CD8-positive, alpha-beta T cell (primary cell): ENCODE measurements at regions of chr5 and their contacts with region 1.

Region 1: DNA sequence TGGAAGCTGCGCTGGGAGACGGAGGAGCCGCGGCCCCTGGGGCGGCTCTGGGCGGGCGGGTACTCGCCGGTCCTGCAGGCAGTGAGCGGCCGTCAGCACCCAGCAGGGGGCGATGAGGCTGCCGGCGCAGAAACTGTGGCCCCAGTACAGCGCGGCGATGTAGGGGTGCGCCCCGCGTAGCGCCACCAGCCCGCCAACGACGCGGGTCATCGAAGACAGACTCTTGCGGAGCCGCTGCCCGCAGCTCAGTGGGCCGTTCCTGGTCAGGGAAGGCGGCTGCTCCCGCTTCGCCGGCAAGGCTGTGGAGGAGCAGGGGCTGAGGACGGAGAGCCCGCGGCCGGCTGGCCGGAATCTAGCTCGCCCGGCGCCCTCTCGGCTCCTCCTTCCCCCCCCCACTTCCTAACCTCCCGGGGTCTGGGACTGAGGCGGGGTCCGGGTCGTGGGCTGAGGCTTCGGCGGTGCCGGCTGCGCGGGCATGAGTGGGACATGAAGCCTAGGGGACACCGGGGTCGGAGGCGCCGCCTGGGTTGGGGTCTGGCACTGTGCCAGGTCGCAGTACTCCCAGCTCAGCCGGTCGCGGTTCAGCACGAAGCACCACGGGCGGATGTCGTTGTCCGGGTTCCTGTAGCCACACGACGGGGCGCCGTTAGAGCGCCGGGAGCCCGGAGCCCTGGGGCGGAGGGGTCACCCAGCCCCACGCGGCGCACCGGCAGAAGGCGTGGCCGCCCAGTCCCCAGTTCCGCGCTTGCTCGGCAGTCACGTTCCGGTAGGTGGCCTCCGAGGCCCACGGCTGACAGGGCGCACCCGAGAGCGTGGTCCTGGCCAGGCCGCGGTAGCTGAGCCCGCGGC is 3.6 kb upstream of the PFN3 start:
- DNase-seq: peak; percentile 74 to 94 (median 85)
- ATAC-seq: peak; percentile 73
- H3K4me3 ChIP-seq: peak overlapping the region; percentile 52 to 72
- H3K4me3 Mint-ChIP-seq: peak overlapping the region; percentile 79
- H3K27ac ChIP-seq: peak overlapping the region in 1 of 2 experiments; percentile 59
- H3K27ac Mint-ChIP-seq: no peak overlapping the region
- H3K4me1 ChIP-seq: peaks cover 44% of the 10 kb centered on the region
- H3K4me1 Mint-ChIP-seq: peaks cover 38% of the 10 kb centered on the region
- H3K27me3 ChIP-seq: peaks cover 0 to 2% of the 10 kb centered on the region in 2 experiments
- H3K27me3 Mint-ChIP-seq: no peaks in the 10 kb centered on the region
- CTCF ChIP-seq: peak; percentile 52

Region 2: DNA sequence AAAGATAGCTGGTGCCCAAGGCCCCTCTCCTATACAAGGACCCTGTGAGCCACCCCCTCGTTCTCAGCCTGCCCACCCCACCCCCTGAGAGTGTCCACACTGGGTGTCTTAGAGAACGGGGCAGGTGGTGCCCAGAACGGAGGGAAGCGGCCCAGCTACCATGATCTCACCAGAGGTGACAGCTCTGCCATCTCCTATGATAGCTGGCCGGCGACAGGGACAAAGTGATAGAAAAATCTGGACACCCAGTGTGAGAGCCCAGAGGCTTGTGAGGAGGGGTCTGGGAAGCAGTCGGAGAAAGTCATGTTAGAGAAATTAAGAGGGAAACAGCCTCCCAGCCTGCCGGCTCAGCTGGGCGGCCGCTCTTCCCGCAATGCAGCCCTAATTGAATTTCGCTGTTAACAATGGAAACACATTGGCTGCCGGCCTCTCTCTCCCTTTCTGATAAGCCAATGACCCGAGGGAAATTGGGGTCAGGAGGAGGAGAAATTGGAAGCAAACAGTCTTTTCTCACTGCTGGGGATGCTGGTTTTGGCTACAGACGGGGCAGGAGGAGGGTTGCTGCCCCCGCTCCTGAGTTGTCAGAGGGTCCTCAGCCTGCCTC is 537.2 kb before region 1 on chr5:
- CTCF ChIA-PET with region 1: no interaction called
- POLR2A ChIA-PET with region 1: no interaction called
- intact Hi-C with region 1: no loop called
- DNase-seq: no peak
- ATAC-seq: no peak
- H3K4me3 ChIP-seq: no peak overlapping the region
- H3K4me3 Mint-ChIP-seq: no peak overlapping the region
- H3K27ac ChIP-seq: no peak overlapping the region
- H3K27ac Mint-ChIP-seq: no peak overlapping the region
- H3K4me1 ChIP-seq: peaks cover 9% of the 10 kb centered on the region
- H3K4me1 Mint-ChIP-seq: no peaks in the 10 kb centered on the region
- H3K27me3 ChIP-seq: peaks cover 0 to 2% of the 10 kb centered on the region in 2 experiments
- H3K27me3 Mint-ChIP-seq: peaks cover 25% of the 10 kb centered on the region
- CTCF ChIP-seq: no peak

Region 3: GRCh38 chr5:177317959-177318377 is 86.0 kb before region 1 on chr5:
- CTCF ChIA-PET with region 1: interaction called, 59 read pairs
- POLR2A ChIA-PET with region 1: no interaction called
- intact Hi-C with region 1: loop called in 1 of 2 experiments (anchors 1 kb)
- DNase-seq: peak; percentile 52 to 85 (median 75)
- ATAC-seq: peak; percentile 81
- H3K4me3 ChIP-seq: no peak overlapping the region
- H3K4me3 Mint-ChIP-seq: no peak overlapping the region
- H3K27ac ChIP-seq: no peak overlapping the region
- H3K27ac Mint-ChIP-seq: no peak overlapping the region
- H3K4me1 ChIP-seq: peaks cover 10% of the 10 kb centered on the region
- H3K4me1 Mint-ChIP-seq: peaks cover 14% of the 10 kb centered on the region
- H3K27me3 ChIP-seq: no peaks in the 10 kb centered on the region
- H3K27me3 Mint-ChIP-seq: no peaks in the 10 kb centered on the region
- CTCF ChIP-seq: peak; percentile 90

Region 4: GRCh38 chr5:177370488-177371119 is 33.4 kb before region 1 on chr5:
- CTCF ChIA-PET with region 1: interaction called, 55 read pairs
- POLR2A ChIA-PET with region 1: interaction called, 4 read pairs
- intact Hi-C with region 1: loop called in 1 of 2 experiments (anchors 2 kb)
- DNase-seq: peak in 8 of 9 experiments; percentile 18 to 81 (median 58)
- ATAC-seq: peak; percentile 63
- H3K4me3 ChIP-seq: no peak overlapping the region
- H3K4me3 Mint-ChIP-seq: no peak overlapping the region
- H3K27ac ChIP-seq: peak overlapping the region in 1 of 2 experiments; percentile 48
- H3K27ac Mint-ChIP-seq: peak overlapping the region; percentile 32
- H3K4me1 ChIP-seq: peaks cover 73% of the 10 kb centered on the region
- H3K4me1 Mint-ChIP-seq: peaks cover 69% of the 10 kb centered on the region
- H3K27me3 ChIP-seq: no peaks in the 10 kb centered on the region
- H3K27me3 Mint-ChIP-seq: no peaks in the 10 kb centered on the region
- CTCF ChIP-seq: no peak

Region 5: GRCh38 chr5:177425801-177426565 is 22.0 kb after region 1 on chr5:
- CTCF ChIA-PET with region 1: interaction called, 222 read pairs
- POLR2A ChIA-PET with region 1: interaction called, 48 read pairs
- intact Hi-C with region 1: loop called (anchors 1 kb)
- DNase-seq: peak; percentile 99 to 100 (median 99)
- ATAC-seq: peak; percentile 80
- H3K4me3 ChIP-seq: peak overlapping the region; percentile 63 to 65
- H3K4me3 Mint-ChIP-seq: peak overlapping the region; percentile 91
- H3K27ac ChIP-seq: peak overlapping the region; percentile 86 to 92
- H3K27ac Mint-ChIP-seq: peak overlapping the region; percentile 98
- H3K4me1 ChIP-seq: peaks cover 46% of the 10 kb centered on the region
- H3K4me1 Mint-ChIP-seq: peaks cover 53% of the 10 kb centered on the region
- H3K27me3 ChIP-seq: no peaks in the 10 kb centered on the region
- H3K27me3 Mint-ChIP-seq: no peaks in the 10 kb centered on the region
- CTCF ChIP-seq: no peak

Region 6: DNA sequence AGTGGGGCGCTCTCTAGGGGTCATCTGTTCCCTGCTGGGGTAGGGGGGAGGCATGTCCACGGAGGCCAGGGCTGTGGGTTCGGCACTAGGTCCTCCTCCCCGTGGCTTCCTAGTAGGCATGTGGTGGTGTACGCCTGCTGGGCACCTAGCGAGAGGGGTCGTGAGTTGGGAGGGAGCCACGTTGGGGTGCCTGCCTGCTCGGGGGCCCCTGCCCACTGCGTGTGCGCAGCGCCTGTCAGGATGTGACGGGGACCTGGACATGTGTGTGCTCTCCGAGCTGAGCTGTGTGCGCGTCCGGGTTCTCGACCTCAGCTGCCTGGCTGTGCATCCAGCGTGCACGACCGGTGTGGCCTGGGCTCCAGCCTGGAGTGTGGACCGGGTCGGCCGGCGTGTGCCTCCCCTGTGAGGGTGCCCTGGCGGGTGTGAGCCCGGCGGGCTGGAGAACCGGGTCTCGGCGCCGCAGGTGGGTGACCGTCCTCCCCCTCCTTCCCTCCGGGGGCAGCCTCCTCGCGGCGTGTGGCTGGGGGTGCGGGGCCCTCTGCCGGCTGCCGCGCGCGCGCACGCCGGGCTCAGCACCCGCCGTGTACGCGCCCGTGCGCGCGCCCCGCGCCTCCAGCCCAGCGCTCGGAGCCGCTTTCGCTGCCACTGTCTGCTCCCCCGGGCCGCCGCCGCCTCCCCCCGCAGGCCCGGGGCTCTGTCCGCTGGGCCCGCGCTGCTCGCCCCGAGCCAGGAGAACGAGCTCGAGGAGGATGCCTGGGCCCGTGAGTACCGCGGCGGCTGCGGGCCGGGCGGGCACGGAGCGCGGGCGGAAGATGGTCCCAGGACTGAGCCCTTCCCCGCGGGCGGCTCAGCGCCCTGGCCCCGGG is 42.4 kb after region 1 on chr5 and contains the start of gene PRR7:
- CTCF ChIA-PET with region 1: interaction called, 628 read pairs
- POLR2A ChIA-PET with region 1: interaction called, 185 read pairs
- intact Hi-C with region 1: loop called in 1 of 2 experiments (anchors 2 kb)
- DNase-seq: peak; percentile 51 to 93 (median 75)
- ATAC-seq: peak; percentile 54
- H3K4me3 ChIP-seq: peak within 1 kb of the TSS; percentile 56 to 61
- H3K4me3 Mint-ChIP-seq: peak within 1 kb of the TSS; percentile 79
- H3K27ac ChIP-seq: peak within 1 kb of the TSS; percentile 61 to 84
- H3K27ac Mint-ChIP-seq: peak within 1 kb of the TSS; percentile 95
- H3K4me1 ChIP-seq: peaks cover 33% of the 10 kb centered on the region
- H3K4me1 Mint-ChIP-seq: peaks cover 44% of the 10 kb centered on the region
- H3K27me3 ChIP-seq: no peaks in the 10 kb centered on the region
- H3K27me3 Mint-ChIP-seq: no peaks in the 10 kb centered on the region
- CTCF ChIP-seq: no peak
- total RNA-seq, gene PRR7: 21.0 TPM

Region 7: GRCh38 chr5:177473461-177474001 is 69.5 kb after region 1 on chr5 and contains the start of gene DBN1:
- CTCF ChIA-PET with region 1: interaction called, 34 read pairs
- POLR2A ChIA-PET with region 1: no interaction called
- intact Hi-C with region 1: no loop called
- DNase-seq: peak in 2 of 9 experiments; percentile 53
- ATAC-seq: peak; percentile 27
- H3K4me3 ChIP-seq: peak within 1 kb of the TSS; percentile 50 to 67
- H3K4me3 Mint-ChIP-seq: peak within 1 kb of the TSS; percentile 80
- H3K27ac ChIP-seq: peak within 1 kb of the TSS; percentile 30 to 53
- H3K27ac Mint-ChIP-seq: peak within 1 kb of the TSS; percentile 82
- H3K4me1 ChIP-seq: peaks cover 43% of the 10 kb centered on the region
- H3K4me1 Mint-ChIP-seq: peaks cover 52% of the 10 kb centered on the region
- H3K27me3 ChIP-seq: no peaks in the 10 kb centered on the region
- H3K27me3 Mint-ChIP-seq: no peaks in the 10 kb centered on the region
- CTCF ChIP-seq: no peak
- total RNA-seq, gene DBN1: 16.2 to 19.9 TPM

Region 8: DNA sequence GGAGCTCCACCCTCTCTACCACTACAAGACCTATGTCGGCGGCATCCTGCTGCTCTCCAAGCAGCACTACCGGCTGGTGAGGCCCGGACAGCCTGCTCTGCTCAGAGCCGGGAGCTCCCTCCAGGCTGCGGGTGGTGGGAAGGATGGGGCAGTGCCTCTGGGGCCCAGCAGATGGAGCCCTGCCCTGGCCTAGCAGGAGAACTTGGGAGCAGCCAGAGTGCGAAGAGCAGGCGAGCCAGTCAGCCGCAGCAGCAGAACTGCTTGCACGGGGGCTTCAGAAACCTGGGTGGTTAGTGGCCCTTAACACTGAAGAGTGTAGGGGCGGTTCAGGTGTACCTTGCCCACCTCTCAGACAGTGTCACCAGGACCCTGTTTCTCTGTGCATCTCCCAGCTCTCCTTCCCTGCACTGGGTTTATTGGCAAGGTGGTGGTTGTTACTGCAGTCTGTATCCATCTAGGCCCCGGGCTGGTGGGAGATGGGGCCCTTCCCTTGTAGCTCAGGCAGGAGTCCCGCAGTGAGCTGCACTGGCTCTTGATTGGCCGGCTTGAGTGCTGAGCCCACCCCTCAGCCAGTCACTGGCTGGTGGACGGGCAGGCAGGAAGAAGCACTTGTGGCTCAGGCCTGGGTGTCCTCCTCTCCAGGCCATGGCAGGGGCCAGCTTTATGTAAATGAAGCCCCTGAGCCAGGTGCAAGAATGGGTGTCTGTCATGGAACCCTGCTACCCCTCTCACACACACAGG is 203.6 kb after region 1 on chr5:
- CTCF ChIA-PET with region 1: no interaction called
- POLR2A ChIA-PET with region 1: no interaction called
- intact Hi-C with region 1: no loop called
- DNase-seq: peak; percentile 28 to 69 (median 59)
- ATAC-seq: peak; percentile 89
- H3K4me3 ChIP-seq: no peak overlapping the region
- H3K4me3 Mint-ChIP-seq: no peak overlapping the region
- H3K27ac ChIP-seq: no peak overlapping the region
- H3K27ac Mint-ChIP-seq: peak overlapping the region; percentile 52
- H3K4me1 ChIP-seq: peaks cover 9% of the 10 kb centered on the region
- H3K4me1 Mint-ChIP-seq: peaks cover 9% of the 10 kb centered on the region
- H3K27me3 ChIP-seq: no peaks in the 10 kb centered on the region
- H3K27me3 Mint-ChIP-seq: no peaks in the 10 kb centered on the region
- CTCF ChIP-seq: peak; percentile 54